WTC11 (cell line): ENCODE measurements at regions of chr2 and their contacts with region 1.

Region 1: DNA sequence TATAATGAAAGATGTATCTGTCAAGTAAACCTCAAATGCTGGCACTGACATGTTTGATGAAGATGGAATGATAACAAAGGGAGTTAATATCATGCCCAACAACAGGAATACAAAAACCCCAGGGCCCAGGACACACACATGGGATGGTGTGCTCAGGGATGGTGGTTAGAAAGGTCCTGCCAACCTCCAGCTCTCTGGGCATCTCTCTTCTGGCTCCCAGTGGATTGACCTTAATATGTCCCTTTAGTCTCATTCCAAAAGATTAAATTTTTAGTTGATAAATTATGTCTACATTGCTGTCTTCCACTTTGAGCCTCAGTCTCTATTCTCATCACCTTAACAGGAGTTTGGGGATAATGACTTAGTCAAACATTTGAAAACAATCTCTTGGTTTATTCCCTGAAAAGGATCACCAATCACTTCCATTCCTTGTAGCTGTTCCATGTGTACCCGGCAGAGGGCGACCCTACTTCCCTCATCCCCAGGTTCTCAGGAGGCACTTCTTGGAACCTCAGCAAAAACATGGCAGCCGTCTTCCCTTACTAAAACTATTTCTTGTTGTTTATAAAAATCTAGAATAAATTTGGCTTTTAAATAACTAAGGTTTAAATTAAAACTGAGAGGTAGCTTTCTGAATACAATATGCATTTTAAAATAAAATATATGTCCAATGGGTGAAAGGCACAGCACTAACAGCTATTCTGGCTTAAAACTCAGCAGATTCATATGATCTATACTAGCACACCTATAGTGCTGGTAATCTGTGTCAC is 29.6 kb downstream of the MCEE start:
- DNase-seq: peak; percentile 72
- ATAC-seq: peak; percentile 63
- H3K4me3 Mint-ChIP-seq: no peak overlapping the region
- H3K27ac Mint-ChIP-seq: no peak overlapping the region
- H3K4me1 Mint-ChIP-seq: peaks cover 29% of the 10 kb centered on the region
- H3K27me3 Mint-ChIP-seq: no peaks in the 10 kb centered on the region
- CTCF ChIP-seq: peak; percentile 59

Region 2: DNA sequence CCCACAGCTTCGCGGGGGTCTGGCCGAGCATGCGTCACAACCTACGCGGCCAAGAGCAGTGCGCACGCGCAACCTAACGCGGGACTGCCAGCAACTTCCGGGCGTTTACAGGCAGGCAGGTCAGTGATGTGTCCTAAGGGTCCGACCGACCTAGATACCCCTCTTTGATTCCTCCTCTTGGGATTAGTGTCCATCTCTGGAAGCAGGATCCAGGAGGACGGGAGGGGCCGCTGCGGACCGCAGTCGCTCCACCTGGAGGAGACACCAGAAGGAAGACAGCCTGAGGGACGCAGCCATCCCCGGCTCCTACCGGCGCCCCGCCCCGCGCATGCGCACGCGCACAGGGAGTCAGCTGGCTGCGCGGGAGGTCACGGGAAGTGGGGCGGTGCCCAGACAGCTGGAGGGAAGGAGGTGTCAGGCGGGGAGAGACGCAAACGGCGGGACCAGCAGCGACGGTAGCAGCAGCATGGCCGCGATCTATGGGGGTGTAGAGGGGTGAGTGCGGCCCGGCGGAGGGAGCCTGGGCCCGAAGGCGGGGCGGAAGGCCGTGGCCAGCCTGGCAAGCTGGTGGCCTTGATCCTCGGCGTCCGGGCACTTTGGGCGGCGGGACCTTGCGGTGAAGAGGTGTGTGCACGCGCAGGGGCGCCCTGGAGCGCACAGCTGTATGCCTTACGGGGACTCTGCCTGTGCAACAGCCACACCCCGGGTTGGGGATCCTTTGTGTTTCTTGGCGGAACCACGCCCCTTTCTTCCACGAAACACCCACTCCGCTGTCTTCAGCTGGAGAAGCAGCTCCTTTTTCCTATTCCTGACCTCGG is 32.0 kb before region 1 on chr2 and contains the start of gene NAGK:
- CTCF ChIA-PET with region 1: interaction called, 56 read pairs
- POLR2A ChIA-PET with region 1: interaction called, 8 read pairs
- DNase-seq: peak; percentile 96
- ATAC-seq: peak; percentile 83
- H3K4me3 Mint-ChIP-seq: peak within 1 kb of the TSS; percentile 97
- H3K27ac Mint-ChIP-seq: peak within 1 kb of the TSS; percentile 98
- H3K4me1 Mint-ChIP-seq: peaks cover 32% of the 10 kb centered on the region
- H3K27me3 Mint-ChIP-seq: peaks cover 2% of the 10 kb centered on the region; the same call in 1 of the 2 replicates
- CTCF ChIP-seq: no peak
- total RNA-seq, gene NAGK: 56.1 to 58.9 TPM (median 57.7 TPM) in 3 replicates

Region 3: GRCh38 chr2:71130113-71130904 is 29.9 kb after region 1 on chr2 and contains the starts of genes MCEE and MPHOSPH10:
- CTCF ChIA-PET with region 1: interaction called, 12 read pairs
- POLR2A ChIA-PET with region 1: no interaction called
- DNase-seq: peak; percentile 92
- ATAC-seq: peak; percentile 94
- H3K4me3 Mint-ChIP-seq: no peak within 1 kb of the TSS
- H3K27ac Mint-ChIP-seq: peak within 1 kb of the TSS; percentile 98
- H3K4me1 Mint-ChIP-seq: peaks cover 9% of the 10 kb centered on the region
- H3K27me3 Mint-ChIP-seq: no peaks in the 10 kb centered on the region
- CTCF ChIP-seq: no peak
- total RNA-seq, gene MCEE: 17.2 to 19.1 TPM (median 18.7 TPM) in 3 replicates
- total RNA-seq, gene MPHOSPH10: 27.8 to 36.6 TPM (median 31.4 TPM) in 3 replicates

Region 4: GRCh38 chr2:71150082-71150816 is 49.9 kb after region 1 on chr2:
- CTCF ChIA-PET with region 1: interaction called, 23 read pairs
- POLR2A ChIA-PET with region 1: no interaction called
- DNase-seq: no peak
- ATAC-seq: peak; percentile 14; the same call in 1 of the 2 replicates
- H3K4me3 Mint-ChIP-seq: no peak overlapping the region
- H3K27ac Mint-ChIP-seq: no peak overlapping the region; the same call in none of the 2 replicates
- H3K4me1 Mint-ChIP-seq: no peaks in the 10 kb centered on the region
- H3K27me3 Mint-ChIP-seq: no peaks in the 10 kb centered on the region; the same call in 1 of the 2 replicates
- CTCF ChIP-seq: no peak